IMR-90 (cell line): ENCODE measurements at regions of chr6 and their contacts with region 1.

Region 1: DNA sequence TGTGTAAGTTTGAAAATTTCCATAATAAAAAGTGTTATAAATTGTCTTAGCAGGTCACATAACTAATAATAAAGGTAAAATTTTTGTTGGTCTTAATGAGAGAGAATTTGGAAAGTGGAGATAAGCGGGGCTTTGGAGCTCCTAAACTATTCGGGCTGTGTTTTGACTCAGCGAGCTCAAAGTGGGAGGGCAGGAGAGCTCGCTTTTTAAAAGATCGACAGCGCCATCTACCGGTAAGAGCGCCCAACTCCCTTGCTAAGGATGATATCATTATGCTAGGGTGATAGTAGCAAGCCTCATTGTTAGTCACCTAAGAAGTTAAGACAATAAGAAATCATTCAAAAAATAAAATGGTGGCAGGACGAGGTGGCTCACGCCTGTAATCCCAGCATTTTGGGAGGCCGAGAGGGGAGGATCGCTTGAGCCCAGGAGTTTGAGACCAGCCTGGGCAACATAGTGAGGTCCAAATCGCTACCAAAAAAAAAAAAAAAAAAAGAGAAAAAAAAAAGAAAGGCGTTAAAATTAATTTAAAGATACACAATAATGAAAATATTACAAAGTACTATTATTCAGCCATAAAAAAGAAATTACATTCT is 24.8 kb downstream of the C6orf15 start:
- DNase-seq: peak; percentile 86
- ATAC-seq: peak; percentile 89
- H3K4me3 ChIP-seq: no peak overlapping the region
- H3K27ac ChIP-seq: no peak overlapping the region
- H3K4me1 ChIP-seq: peaks cover 10% of the 10 kb centered on the region
- H3K27me3 ChIP-seq: no peaks in the 10 kb centered on the region; the same call in 1 of the 2 replicates
- CTCF ChIP-seq: peak; percentile 89
- POLR2A ChIP-seq: no peak
- RAD21 ChIP-seq: peak; percentile 84

Region 2: DNA sequence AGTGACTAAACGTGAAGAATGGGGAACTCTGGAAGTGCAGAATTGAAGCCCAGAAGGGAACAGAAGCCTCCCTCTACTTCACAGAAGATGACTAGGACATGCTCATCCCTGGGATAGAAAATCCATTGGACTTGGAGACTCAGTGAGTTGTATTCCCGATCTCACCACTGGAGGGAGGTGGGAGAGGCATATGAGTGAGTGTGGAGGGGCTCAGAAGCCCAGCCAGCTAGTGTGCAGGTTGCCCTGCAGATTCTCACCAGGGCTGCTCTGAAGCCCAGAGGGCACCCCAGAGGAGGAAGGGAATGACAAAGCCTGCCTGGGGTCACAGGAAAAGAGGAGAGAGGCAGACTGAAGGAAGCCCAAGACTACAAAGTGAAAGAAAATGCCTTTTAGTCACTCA is 640.4 kb before region 1 on chr6:
- CTCF ChIA-PET with region 1: no interaction called
- POLR2A ChIA-PET with region 1: no interaction called
- dilution Hi-C with region 1: no loop called
- in situ Hi-C with region 1: no loop called
- intact Hi-C with region 1: no loop called
- DNase-seq: peak; percentile 8
- ATAC-seq: no peak
- H3K4me3 ChIP-seq: no peak overlapping the region
- H3K27ac ChIP-seq: no peak overlapping the region
- H3K4me1 ChIP-seq: peaks cover 4% of the 10 kb centered on the region
- H3K27me3 ChIP-seq: peaks cover 77% of the 10 kb centered on the region
- CTCF ChIP-seq: 0 out of 2 replicates have a peak, but pooled peaks have one; percentile 7
- POLR2A ChIP-seq: no peak
- RAD21 ChIP-seq: no peak

Region 3: GRCh38 chr6:30489081-30490025 is 598.2 kb before region 1 on chr6 and contains the start of gene HLA-E:
- CTCF ChIA-PET with region 1: no interaction called
- POLR2A ChIA-PET with region 1: no interaction called
- dilution Hi-C with region 1: no loop called
- in situ Hi-C with region 1: loop called (anchors 25 kb)
- intact Hi-C with region 1: no loop called
- DNase-seq: peak; percentile 100
- ATAC-seq: peak; percentile 94
- H3K4me3 ChIP-seq: peak within 1 kb of the TSS; percentile 81
- H3K27ac ChIP-seq: peak within 1 kb of the TSS; percentile 84
- H3K4me1 ChIP-seq: peaks cover 11% of the 10 kb centered on the region
- H3K27me3 ChIP-seq: no peaks in the 10 kb centered on the region
- CTCF ChIP-seq: no peak
- POLR2A ChIP-seq: peak; percentile 99
- RAD21 ChIP-seq: no peak
- total RNA-seq, gene HLA-E: 84.8 and 85.8 TPM in 2 replicates

Region 4: GRCh38 chr6:30678964-30679726 is 408.4 kb before region 1 on chr6:
- CTCF ChIA-PET with region 1: no interaction called
- POLR2A ChIA-PET with region 1: no interaction called
- dilution Hi-C with region 1: no loop called
- in situ Hi-C with region 1: no loop called
- intact Hi-C with region 1: loop called (anchors 5 kb)
- DNase-seq: peak; percentile 73
- ATAC-seq: peak; percentile 36
- H3K4me3 ChIP-seq: no peak overlapping the region
- H3K27ac ChIP-seq: peak overlapping the region; percentile 49
- H3K4me1 ChIP-seq: peaks cover 14% of the 10 kb centered on the region
- H3K27me3 ChIP-seq: no peaks in the 10 kb centered on the region
- CTCF ChIP-seq: peak; percentile 93
- POLR2A ChIP-seq: no peak; the same call in 1 of the 2 replicates
- RAD21 ChIP-seq: peak; percentile 95

Region 5: GRCh38 chr6:30742316-30743098 is 345.1 kb before region 1 on chr6 and contains the start of gene FLOT1:
- CTCF ChIA-PET with region 1: no interaction called
- POLR2A ChIA-PET with region 1: no interaction called
- dilution Hi-C with region 1: no loop called
- in situ Hi-C with region 1: no loop called
- intact Hi-C with region 1: loop called (anchors 5 kb)
- DNase-seq: peak; percentile 93
- ATAC-seq: peak; percentile 83
- H3K4me3 ChIP-seq: peak within 1 kb of the TSS; percentile 96
- H3K27ac ChIP-seq: peak within 1 kb of the TSS; percentile 98
- H3K4me1 ChIP-seq: peaks cover 18% of the 10 kb centered on the region
- H3K27me3 ChIP-seq: no peaks in the 10 kb centered on the region
- CTCF ChIP-seq: no peak
- POLR2A ChIP-seq: peak; percentile 60
- RAD21 ChIP-seq: 0 out of 2 replicates have a peak, but pooled peaks have one; percentile 9
- total RNA-seq, gene FLOT1: 96.2 and 104 TPM in 2 replicates

Region 6: DNA sequence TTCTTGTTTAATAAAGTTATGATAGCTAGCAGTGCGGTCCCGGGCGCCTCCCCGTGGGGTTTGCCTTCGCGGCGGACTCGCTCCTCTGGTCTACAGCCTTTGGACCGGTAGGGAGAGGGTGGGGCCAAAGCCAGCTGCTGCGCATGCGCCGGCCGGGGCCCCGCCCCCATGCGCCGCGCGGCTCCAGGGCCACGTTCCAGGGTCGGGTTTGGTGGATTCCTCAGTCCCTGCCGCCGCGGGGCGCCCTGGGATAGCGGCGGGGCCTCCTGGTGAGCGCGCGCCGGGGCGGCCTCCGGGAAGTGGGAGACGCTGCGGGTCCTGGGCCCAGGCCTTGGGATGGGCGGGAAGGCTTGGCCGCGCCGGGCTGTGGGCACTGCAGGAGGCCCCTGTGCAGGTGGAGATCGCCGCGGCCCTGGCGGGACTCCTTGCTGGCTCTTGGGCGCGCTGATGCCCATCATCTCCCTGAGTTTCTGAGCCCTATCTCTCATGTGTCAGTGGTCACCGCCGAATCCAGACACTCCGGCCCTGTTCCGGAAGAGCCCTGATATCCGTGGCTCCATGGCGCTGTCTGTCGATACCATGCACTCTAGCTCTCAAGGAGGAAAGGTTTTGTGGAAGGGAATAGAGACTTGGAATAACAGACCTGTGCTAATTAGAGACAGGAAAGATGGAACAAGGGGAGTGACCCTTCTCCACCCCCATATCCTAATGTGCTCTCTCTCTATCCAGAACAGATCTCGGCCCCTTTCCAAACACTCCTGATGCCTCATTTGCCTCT is 173.3 kb before region 1 on chr6 and contains the start of gene VARS2:
- CTCF ChIA-PET with region 1: interaction called, 25 read pairs
- POLR2A ChIA-PET with region 1: interaction called, 10 read pairs
- dilution Hi-C with region 1: no loop called
- in situ Hi-C with region 1: no loop called
- intact Hi-C with region 1: loop called (anchors 1 kb)
- DNase-seq: peak; percentile 88
- ATAC-seq: peak; percentile 97
- H3K4me3 ChIP-seq: peak within 1 kb of the TSS; percentile 44
- H3K27ac ChIP-seq: peak within 1 kb of the TSS; percentile 82
- H3K4me1 ChIP-seq: peaks cover 12% of the 10 kb centered on the region
- H3K27me3 ChIP-seq: no peaks in the 10 kb centered on the region
- CTCF ChIP-seq: peak; percentile 54
- POLR2A ChIP-seq: peak; percentile 60; the same call in 1 of the 2 replicates
- RAD21 ChIP-seq: peak; percentile 50
- total RNA-seq, gene VARS2: 6.9 and 7.2 TPM in 2 replicates